Psoas muscle (tissue), 8 donors: ENCODE measurements at regions of chr2 and their contacts with region 1.

Region 1: DNA sequence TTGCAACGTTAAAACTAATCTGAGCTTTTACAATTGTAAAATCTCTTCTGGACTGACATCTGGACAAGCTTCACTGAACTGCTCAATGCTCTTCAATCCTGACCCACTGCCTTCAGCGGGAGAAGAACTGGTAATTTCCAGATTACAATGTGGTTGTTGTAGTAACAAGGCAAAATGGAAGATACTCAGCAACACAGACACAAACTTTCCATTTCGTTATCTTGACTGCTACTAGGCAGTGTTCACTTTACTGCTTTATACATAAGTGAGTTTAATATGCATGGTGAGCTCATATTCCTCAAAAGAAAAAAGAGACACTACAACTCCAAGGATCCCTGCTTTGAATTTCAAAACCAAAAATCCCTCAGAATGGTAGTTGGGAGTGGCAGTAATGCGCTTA is 51.9 kb downstream of the GRB14 start:
- DNase-seq: no peak
- ATAC-seq: no peak
- H3K4me3 ChIP-seq: no peak overlapping the region
- H3K27ac ChIP-seq: no peak overlapping the region
- H3K4me1 ChIP-seq: no peaks in the 10 kb centered on the region
- H3K27me3 ChIP-seq: no peaks in the 10 kb centered on the region
- CTCF ChIP-seq: no peak

Region 2: DNA sequence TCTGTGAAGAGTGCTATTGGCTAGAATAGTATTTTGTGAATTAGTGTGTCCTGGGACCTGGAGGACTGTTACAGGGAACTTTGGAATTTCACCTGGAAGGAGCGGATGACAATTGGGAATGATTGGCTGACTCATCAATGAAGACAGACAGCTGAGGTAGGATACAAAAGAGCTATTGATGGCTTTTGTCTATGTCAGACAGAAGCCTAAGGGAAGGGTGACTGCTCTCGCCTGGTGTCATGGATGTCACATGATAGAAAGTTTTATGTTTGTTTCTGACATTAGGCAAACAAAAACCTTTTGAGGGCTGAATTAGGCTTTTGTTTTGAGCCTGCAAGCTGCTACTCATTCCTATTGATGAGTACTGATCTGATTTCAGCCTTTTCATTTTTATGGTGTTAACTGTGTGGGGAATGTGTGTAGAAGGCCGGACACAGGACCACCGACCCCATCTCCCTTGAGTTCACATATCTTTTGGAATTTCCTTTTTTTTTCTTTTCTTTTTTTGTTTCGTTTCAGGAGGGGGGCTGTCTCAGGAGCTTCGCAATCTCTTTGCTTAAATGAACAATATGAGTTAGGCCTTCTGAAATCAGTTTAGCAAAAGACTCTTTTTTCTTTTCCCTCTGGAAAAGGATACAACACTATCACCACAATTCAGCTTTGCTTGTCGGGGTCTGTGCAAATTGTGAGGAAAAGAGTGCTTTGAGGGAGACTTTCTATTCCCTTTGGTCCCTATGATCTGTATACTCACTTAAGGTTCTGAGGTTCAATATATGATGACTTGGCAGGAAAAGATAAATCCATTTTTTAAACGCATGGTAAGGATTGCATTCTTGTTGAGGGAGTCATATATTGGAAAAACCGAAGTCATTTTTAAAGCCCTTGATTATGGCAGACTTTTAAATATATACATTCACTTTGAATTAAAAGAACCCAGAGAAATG is 625.7 kb before region 1 on chr2:
- intact Hi-C with region 1: no loop called
- DNase-seq: no peak
- ATAC-seq: no peak
- H3K4me3 ChIP-seq: no peak overlapping the region
- H3K27ac ChIP-seq: no peak overlapping the region
- H3K4me1 ChIP-seq: no peaks in the 10 kb centered on the region
- H3K27me3 ChIP-seq: peaks cover 0 to 3% (median 0%) of the 10 kb centered on the region in 3 donors
- CTCF ChIP-seq: no peak

Region 3: DNA sequence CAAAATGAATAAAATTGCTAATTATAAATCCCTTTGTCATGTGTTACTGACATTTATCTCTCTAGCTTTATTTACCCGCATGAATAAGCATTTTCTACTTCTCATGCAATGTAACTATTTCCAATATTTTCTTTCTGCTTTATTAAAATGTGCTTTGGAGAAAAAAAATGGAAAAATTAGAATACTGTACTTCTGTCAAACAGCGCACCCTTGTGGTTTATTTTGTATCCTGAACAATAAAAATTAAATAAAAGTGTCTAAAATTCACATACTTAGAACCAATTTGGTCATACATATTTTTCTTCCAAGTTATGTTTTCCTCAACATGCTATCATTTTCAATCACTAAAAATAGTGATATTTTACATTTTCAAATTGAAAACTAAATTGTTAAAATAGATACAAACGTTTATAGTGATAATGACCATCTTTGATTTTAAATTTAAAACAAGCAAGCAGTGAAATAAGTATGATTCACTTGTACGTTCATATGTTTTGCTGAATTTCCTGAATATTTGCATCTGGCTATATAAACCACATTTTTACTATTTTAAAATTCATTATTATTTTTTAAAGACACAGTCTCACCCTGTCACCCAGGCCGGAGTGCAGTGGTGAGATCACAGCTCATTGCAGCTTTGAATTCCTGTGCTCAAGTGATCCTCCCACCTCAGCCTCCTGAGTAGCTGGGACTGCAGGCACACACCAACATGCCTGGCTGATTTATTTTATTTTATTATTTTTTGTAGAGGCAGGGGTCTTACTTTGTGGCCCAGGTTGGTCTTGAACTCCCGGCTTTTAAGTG is 147.8 kb after region 1 on chr2:
- intact Hi-C with region 1: loop called in 1 of 2 experiments (anchors 5 kb)
- DNase-seq: no peak
- ATAC-seq: no peak
- H3K4me3 ChIP-seq: no peak overlapping the region
- H3K27ac ChIP-seq: no peak overlapping the region
- H3K4me1 ChIP-seq: no peaks in the 10 kb centered on the region
- H3K27me3 ChIP-seq: no peaks in the 10 kb centered on the region
- CTCF ChIP-seq: peak; percentile 66